ENCODE measurements at regions of chr15 and their contacts with region 1.

Region 1: DNA sequence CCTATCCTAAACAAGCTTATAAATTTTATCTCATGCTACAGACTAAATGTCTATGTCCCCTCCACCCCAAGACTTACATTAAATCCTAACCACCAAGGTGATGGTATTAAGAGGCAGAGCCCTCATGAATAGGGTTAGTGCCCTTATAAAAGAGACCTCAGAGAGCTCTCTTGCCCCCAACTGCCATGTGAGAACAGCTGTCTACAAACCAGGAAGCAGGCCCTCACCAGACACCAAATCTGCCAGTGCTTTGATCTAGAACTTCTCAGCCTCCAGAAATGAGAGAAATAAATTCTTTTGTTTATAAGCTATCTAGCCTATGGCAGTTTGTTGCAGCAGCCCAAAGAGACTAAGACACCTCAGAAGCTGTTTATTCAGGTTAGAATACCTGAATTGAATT is 58.5 kb downstream of the TP53BP1 start:
- DNase-seq: no peak
- ATAC-seq: no peak
- H3K4me3 Mint-ChIP-seq: no peak overlapping the region
- H3K27ac Mint-ChIP-seq: no peak overlapping the region
- H3K4me1 Mint-ChIP-seq: no peaks in the 10 kb centered on the region
- H3K27me3 Mint-ChIP-seq: no peaks in the 10 kb centered on the region

Region 2: GRCh38 chr15:43423793-43424192 is 10.7 kb before region 1 on chr15:
- CTCF ChIA-PET with region 1: interaction called, 3 read pairs
- POLR2A ChIA-PET with region 1: no interaction called
- intact Hi-C with region 1: loop called in 1 of 2 experiments (anchors 2 kb)
- DNase-seq: no peak
- ATAC-seq: no peak
- H3K4me3 Mint-ChIP-seq: no peak overlapping the region
- H3K27ac Mint-ChIP-seq: no peak overlapping the region
- H3K4me1 Mint-ChIP-seq: peaks cover 7% of the 10 kb centered on the region
- H3K27me3 Mint-ChIP-seq: no peaks in the 10 kb centered on the region

Region 3: GRCh38 chr15:43469867-43470266 is 35.4 kb after region 1 on chr15:
- CTCF ChIA-PET with region 1: no interaction called
- POLR2A ChIA-PET with region 1: no interaction called
- intact Hi-C with region 1: no loop called
- DNase-seq: no peak
- ATAC-seq: peak; percentile 68
- H3K4me3 Mint-ChIP-seq: no peak overlapping the region
- H3K27ac Mint-ChIP-seq: no peak overlapping the region
- H3K4me1 Mint-ChIP-seq: peaks cover 2% of the 10 kb centered on the region
- H3K27me3 Mint-ChIP-seq: no peaks in the 10 kb centered on the region

Measured in activated CD4-positive, alpha-beta T cell treated with anti-CD3 and anti-CD28 coated beads for 36 hours (primary cell).